ENCODE measurements at regions of chr11 and their contacts with region 1.

Region 1: GRCh38 chr11:132472411-132473172 is 1059.7 kb downstream of the OPCML start:
- DNase-seq: peak in 2 of 5 donors; percentile 9 to 23
- ATAC-seq: peak in 2 of 4 donors; percentile 26 to 54
- H3K4me3 ChIP-seq: no peak overlapping the region
- H3K27ac ChIP-seq: no peak overlapping the region
- H3K4me1 ChIP-seq: peaks cover 0 to 8% (median 0%) of the 10 kb centered on the region in 12 donors
- H3K27me3 ChIP-seq: peaks cover 0 to 4% (median 0%) of the 10 kb centered on the region in 9 donors
- CTCF ChIP-seq: peak in 2 of 12 donors; percentile 27
- POLR2A ChIP-seq: no peak

Region 2: GRCh38 chr11:132111838-132112237 is 360.8 kb before region 1 on chr11:
- intact Hi-C with region 1: no loop called
- DNase-seq: no peak
- ATAC-seq: peak in 3 of 4 donors; percentile 29 to 70 (median 57)
- H3K4me3 ChIP-seq: no peak overlapping the region
- H3K27ac ChIP-seq: peak overlapping the region in 10 of 12 donors; percentile 15 to 66 (median 40)
- H3K4me1 ChIP-seq: peaks cover 0 to 17% (median 0%) of the 10 kb centered on the region in 12 donors
- H3K27me3 ChIP-seq: peaks cover 0 to 4% (median 0%) of the 10 kb centered on the region in 9 donors
- CTCF ChIP-seq: no peak
- POLR2A ChIP-seq: no peak

Region 3: GRCh38 chr11:132330515-132330914 is 142.1 kb before region 1 on chr11:
- intact Hi-C with region 1: no loop called
- DNase-seq: no peak
- ATAC-seq: no peak
- H3K4me3 ChIP-seq: no peak overlapping the region
- H3K27ac ChIP-seq: no peak overlapping the region
- H3K4me1 ChIP-seq: no peaks in the 10 kb centered on the region
- H3K27me3 ChIP-seq: no peaks in the 10 kb centered on the region
- CTCF ChIP-seq: no peak
- POLR2A ChIP-seq: no peak

Region 4: DNA sequence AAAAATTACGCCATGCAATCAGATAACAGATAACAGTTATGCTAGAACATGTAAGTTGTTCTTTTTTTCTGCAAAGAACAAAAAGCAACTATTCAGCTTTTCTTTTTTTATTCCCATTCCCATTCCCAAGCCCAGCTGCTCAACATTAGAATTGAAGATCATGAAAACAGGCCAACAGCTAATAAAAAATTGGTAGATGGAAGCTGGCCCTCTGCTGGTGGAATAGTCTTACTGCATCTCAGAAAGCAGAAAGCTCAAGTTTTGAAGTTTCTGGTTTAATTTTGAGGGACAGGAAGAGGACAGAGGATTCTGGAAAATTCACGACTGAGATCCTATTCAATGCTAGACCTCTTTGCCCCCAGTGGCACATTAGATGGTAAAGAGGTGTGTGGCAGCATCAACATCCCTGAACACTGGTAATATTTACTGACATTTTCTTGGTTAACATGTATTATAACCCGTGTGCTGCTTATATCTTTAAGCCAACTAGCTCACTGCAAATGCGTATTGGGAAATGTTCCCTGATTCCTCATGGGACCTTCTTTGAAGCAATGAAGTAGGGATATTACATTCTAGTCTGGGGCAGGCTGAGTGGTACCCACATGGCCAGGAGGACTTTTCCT is 468.5 kb after region 1 on chr11:
- intact Hi-C with region 1: loop called in 1 of 10 experiments (anchors 10 kb)
- DNase-seq: no peak
- ATAC-seq: no peak
- H3K4me3 ChIP-seq: no peak overlapping the region
- H3K27ac ChIP-seq: no peak overlapping the region
- H3K4me1 ChIP-seq: peaks cover 0 to 15% (median 0%) of the 10 kb centered on the region in 12 donors
- H3K27me3 ChIP-seq: peaks cover 8 to 41% (median 32%) of the 10 kb centered on the region in 9 donors
- CTCF ChIP-seq: peak; percentile 65 to 86 (median 77)
- POLR2A ChIP-seq: no peak